Spleen (tissue), 13 donors: ENCODE measurements at regions of chr14 and their contacts with region 1.

Region 1: GRCh38 chr14:60091550-60092530 is at the start of gene PCNX4:
- DNase-seq: peak; percentile 99
- H3K4me3 ChIP-seq: peak within 1 kb of the TSS; percentile 57 to 84 (median 64)
- H3K27ac ChIP-seq: peak within 1 kb of the TSS; percentile 94 to 99 (median 97)
- H3K4me1 ChIP-seq: peaks cover 18 to 46% (median 37%) of the 10 kb centered on the region in 6 donors
- H3K27me3 ChIP-seq: no peaks in the 10 kb centered on the region
- CTCF ChIP-seq: peak in 5 of 11 experiments; percentile 15 to 34 (median 19)
- POLR2A ChIP-seq: peak; percentile 65 to 91 (median 71)
- total RNA-seq, gene PCNX4: 40.2 to 102 (median 51.9) TPM

Region 2: DNA sequence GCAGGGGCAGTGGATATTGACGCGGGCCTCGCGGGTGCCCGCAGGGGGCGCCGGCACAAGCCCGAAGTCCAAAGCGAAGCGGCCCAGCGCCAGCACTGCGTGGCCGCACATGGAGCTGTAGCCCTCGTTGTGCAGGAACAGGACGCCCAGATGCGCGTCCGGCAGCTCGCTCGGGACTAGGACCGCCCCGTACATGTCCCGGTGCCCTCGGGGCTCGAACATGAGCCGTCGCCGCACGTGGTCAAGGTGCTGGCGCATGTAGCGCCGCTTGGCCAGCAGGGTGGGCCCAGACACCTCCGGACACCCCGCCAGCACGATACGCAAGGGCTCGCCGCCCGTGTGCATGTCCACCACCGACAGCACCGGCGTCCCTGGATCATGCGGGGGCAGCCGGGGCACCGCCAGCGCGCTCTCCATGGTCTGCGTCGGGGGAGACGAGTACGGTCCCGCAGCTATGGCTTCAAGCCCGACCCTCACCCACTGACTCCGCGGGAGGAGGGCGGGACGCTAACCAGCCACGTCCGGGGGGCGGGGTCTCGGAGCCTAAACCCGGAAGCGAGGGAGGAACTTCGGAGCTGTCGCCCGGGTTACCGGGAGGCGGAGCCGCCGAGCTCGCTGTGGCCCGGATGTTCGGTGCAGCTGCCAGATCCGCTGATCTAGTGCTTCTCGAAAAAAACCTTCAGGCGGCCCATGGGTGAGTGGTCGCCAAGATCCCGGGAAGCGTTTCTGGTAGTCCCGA is 607.8 kb before region 1 on chr14 and contains the starts of genes JKAMP and L3HYPDH:
- intact Hi-C with region 1: loop called (anchors 10 kb)
- DNase-seq: peak; percentile 100
- H3K4me3 ChIP-seq: peak within 1 kb of the TSS; percentile 74 to 98 (median 90)
- H3K27ac ChIP-seq: peak within 1 kb of the TSS; percentile 88 to 97 (median 94)
- H3K4me1 ChIP-seq: peaks cover 36 to 85% (median 68%) of the 10 kb centered on the region in 6 donors
- H3K27me3 ChIP-seq: no peaks in the 10 kb centered on the region
- CTCF ChIP-seq: peak in 9 of 11 experiments; percentile 37 to 78 (median 69)
- POLR2A ChIP-seq: peak in 2 of 3 donors; percentile 4 to 67
- total RNA-seq, gene JKAMP: 28.5 to 92.2 (median 40.4) TPM
- total RNA-seq, gene L3HYPDH: 24.8 to 71.8 (median 39.2) TPM

Region 3: DNA sequence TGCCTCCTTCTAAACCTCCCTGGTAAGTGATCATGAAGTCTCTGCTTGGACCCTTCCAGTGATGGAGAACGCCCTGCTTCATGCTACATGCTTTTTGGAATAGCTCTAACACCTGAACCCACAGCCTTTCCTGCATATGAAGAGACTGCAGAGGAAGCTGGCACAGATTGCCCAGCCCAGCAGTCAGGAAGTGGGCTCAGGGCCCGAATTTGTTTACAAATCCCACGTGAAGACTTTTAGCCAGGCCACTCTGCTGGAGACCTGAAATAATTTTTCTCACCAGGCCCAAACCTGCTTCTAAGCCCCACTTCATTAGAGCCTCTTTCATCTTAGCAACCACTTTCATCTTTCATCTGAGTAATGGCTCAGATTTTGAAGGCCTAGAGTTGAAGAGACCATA is 244.1 kb before region 1 on chr14:
- intact Hi-C with region 1: no loop called
- DNase-seq: no peak
- H3K4me3 ChIP-seq: no peak overlapping the region
- H3K27ac ChIP-seq: no peak overlapping the region
- H3K4me1 ChIP-seq: peaks cover 0 to 15% (median 0%) of the 10 kb centered on the region in 6 donors
- H3K27me3 ChIP-seq: no peaks in the 10 kb centered on the region
- CTCF ChIP-seq: no peak
- POLR2A ChIP-seq: no peak

Region 4: GRCh38 chr14:59918824-59919569 is 172.8 kb before region 1 on chr14:
- intact Hi-C with region 1: no loop called
- DNase-seq: no peak
- H3K4me3 ChIP-seq: peak overlapping the region; percentile 28 to 68 (median 37)
- H3K27ac ChIP-seq: no peak overlapping the region
- H3K4me1 ChIP-seq: peaks cover 10 to 17% (median 15%) of the 10 kb centered on the region in 6 donors
- H3K27me3 ChIP-seq: peaks cover 0 to 46% (median 11%) of the 10 kb centered on the region in 7 donors
- CTCF ChIP-seq: peak in 8 of 11 experiments; percentile 17 to 47 (median 41)
- POLR2A ChIP-seq: no peak

Region 5: DNA sequence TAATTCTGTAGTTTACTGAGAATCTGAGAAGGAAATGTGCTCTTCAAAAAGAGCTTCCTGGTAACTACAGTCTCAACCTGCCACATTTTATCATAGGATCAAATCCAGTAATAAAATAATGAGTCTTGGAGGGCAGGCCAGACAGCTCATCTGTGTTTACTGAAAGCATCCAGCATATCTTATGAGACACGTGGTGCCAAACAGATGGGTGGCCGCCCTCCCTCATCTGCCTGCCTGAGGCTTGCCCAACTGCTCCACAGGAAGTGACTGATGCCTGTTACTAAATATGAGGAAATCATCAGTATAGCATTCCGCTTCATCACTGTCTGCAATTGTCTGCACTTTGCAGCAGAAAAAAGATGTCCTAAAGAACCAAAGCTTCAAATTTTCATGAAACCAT is 59.9 kb after region 1 on chr14:
- intact Hi-C with region 1: no loop called
- DNase-seq: peak; percentile 93
- H3K4me3 ChIP-seq: peak overlapping the region in 1 of 8 donors; percentile 30
- H3K27ac ChIP-seq: peak overlapping the region; percentile 17 to 85 (median 80)
- H3K4me1 ChIP-seq: peaks cover 18 to 62% (median 44%) of the 10 kb centered on the region in 6 donors
- H3K27me3 ChIP-seq: no peaks in the 10 kb centered on the region
- CTCF ChIP-seq: no peak
- POLR2A ChIP-seq: peak in 1 of 3 donors; percentile 15

Region 6: DNA sequence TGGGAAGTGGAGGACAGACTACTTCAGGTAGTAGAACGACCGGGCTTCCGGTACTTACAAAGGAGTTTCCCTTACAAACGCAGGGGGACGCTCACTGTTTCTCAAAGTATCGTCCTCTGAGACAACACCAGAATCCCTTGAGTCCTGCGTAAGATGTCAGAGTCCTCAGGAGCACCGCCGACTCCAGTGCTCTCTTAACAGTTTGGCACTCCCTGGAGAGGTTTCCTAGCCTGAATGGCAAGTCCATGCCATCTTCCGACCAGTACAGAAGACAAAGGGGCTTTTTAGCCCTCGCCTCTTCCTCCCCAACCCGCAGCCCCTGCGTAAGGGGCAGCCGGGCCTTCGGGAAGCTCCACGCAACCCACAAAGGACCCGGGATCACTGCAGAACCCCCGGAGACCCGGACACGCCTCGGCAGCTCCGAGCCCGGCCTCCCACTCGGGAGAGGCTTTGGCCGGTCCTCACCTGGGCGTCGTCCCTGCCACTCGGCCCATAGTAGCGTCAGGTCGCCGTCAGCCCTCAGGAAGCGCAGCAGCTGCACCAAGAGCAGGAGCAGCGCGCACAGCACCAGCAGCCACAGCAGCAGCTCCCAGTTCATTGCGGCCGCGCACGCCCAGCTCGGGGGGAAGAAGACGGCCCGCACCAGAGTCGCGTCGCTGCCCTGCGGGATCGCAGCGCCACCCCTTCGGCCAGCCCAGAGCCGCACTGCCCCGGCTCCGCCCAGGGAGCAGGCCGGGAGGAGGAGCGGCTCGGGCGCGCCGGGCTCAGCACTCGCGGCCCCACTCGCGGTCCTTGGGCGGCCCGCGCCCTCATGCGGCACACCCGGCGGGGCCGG is 73.1 kb after region 1 on chr14 and contains the start of gene DHRS7:
- intact Hi-C with region 1: loop called (anchors 5 kb)
- DNase-seq: peak; percentile 98
- H3K4me3 ChIP-seq: peak within 1 kb of the TSS; percentile 68 to 95 (median 84)
- H3K27ac ChIP-seq: peak within 1 kb of the TSS; percentile 96 to 99 (median 98)
- H3K4me1 ChIP-seq: peaks cover 9 to 63% (median 38%) of the 10 kb centered on the region in 6 donors
- H3K27me3 ChIP-seq: no peaks in the 10 kb centered on the region
- CTCF ChIP-seq: peak in 9 of 11 experiments; percentile 1 to 72 (median 57)
- POLR2A ChIP-seq: peak in 2 of 3 donors; percentile 28 to 45
- total RNA-seq, gene DHRS7: 47.5 to 93.1 (median 56.2) TPM

Region 7: GRCh38 chr14:60248697-60249318 is 157.0 kb after region 1 on chr14 and contains the start of gene PPM1A:
- intact Hi-C with region 1: loop called (anchors 5 kb)
- DNase-seq: peak; percentile 99
- H3K4me3 ChIP-seq: peak within 1 kb of the TSS; percentile 61 to 85 (median 73)
- H3K27ac ChIP-seq: peak within 1 kb of the TSS; percentile 100
- H3K4me1 ChIP-seq: peaks cover 15 to 64% (median 41%) of the 10 kb centered on the region in 6 donors
- H3K27me3 ChIP-seq: no peaks in the 10 kb centered on the region
- CTCF ChIP-seq: peak in 1 of 11 experiments; percentile 24
- POLR2A ChIP-seq: peak; percentile 55 to 91 (median 84)
- total RNA-seq, gene PPM1A: 34.7 to 63.0 (median 53.0) TPM